ENCODE measurements at regions of chr11 and their contacts with region 1.

Region 1: DNA sequence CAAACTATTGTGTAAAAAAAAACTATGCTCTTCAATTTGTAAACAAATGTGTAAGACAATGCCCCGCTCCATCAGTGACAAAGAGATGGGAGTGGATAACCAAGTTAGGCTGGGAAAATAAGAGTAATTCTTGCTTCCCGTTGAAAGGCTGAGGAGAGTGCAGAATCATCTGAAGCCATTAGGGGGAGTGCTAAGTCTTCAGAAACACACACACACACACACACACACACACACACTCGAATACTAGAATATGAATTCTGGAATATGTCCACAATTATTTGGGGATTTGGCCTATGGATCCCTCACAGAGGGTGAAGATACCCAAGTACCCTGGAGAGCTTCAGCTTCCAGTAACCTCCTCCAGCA is 27.8 kb upstream of the ROBO3 start:
- DNase-seq: peak; percentile 56 to 67 (median 64)
- ATAC-seq: peak; percentile 84
- H3K4me3 ChIP-seq: no peak overlapping the region
- H3K27ac ChIP-seq: no peak overlapping the region
- H3K4me1 ChIP-seq: peaks cover 0 to 10% of the 10 kb centered on the region in 2 experiments; a peak in 2 of 5 replicates
- H3K27me3 ChIP-seq: peaks cover 44 to 51% of the 10 kb centered on the region in 2 experiments
- CTCF ChIP-seq: peak; percentile 56 to 78 (median 76); a peak in 5 of 6 replicates
- EP300 ChIP-seq: no peak
- POLR2A ChIP-seq: no peak
- RAD21 ChIP-seq: peak; percentile 59 to 85

Region 2: DNA sequence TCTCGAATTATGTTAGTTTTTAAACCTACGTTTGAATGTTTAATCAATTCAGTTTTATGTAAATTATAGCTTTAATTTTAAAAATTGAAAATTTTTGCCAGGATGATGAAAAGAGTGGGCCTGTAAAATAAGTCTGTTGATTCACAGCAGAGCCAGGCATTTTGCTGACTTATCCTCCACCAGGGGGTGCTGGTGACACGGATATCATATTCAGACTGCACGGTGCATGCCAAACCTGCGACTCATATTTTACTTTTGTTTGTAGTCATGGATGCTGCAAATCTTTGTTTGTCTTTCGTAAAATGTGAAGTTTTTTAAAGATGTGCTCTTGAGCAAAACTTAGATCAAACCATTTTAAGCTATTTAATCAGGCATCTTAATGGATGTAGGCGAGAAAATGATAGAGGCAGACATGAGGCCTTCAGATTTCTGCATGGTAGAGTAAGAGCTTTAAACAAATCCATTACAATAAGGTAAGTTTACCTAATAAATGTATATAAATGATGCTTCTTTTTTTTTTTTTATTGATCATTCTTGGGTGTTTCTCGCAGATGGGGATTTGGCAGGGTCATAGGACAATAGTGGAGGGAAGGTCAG is 435.1 kb before region 1 on chr11:
- CTCF ChIA-PET with region 1: no interaction called
- POLR2A ChIA-PET with region 1: no interaction called
- in situ Hi-C with region 1: loop called (anchors 25 kb)
- intact Hi-C with region 1: no loop called
- DNase-seq: peak; percentile 58 to 80 (median 64)
- ATAC-seq: peak; percentile 97
- H3K4me3 ChIP-seq: no peak overlapping the region
- H3K27ac ChIP-seq: no peak overlapping the region
- H3K4me1 ChIP-seq: no peaks in the 10 kb centered on the region
- H3K27me3 ChIP-seq: no peaks in the 10 kb centered on the region
- CTCF ChIP-seq: peak; percentile 75 to 79 (median 78)
- EP300 ChIP-seq: no peak
- POLR2A ChIP-seq: no peak
- RAD21 ChIP-seq: peak; percentile 49 to 74

Region 3: DNA sequence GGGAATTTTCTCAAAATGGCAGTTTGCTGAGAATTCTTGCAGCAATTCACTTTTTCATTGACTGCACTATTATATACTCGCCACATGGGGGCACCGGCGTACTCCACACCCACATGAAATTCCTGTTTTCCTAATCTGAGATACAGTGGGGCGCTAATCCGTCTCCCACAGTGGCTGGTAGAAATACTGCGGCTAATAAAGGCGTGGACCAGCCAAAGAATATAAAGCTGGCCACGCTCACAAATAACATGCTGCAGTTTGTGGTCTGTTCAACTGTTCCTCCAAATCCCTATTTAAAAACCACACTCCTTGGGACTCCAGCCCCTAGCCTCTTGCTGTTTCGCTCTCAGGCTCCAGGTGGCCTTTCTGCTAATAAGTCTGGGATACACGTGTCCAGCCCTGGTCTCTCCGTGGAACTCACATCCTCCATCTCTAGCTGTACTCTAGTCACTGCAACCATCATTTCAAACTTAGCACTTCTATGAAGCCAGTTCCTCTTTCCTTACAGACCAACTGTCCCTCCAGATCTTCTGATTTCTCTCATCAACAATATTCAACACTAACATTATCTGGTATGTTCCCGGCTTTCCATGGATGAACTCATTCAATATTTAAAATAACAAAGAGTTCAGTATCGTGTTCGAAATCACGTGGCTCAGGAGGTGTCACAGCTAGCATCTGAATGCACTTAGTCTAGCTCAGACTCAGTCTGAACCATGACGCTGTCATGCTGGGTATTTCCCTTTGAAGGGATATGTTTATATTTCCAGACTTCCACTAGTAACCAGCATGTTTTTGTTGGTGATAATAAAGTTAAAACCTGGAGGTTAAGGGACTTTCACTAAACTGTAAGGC is 192.8 kb before region 1 on chr11:
- CTCF ChIA-PET with region 1: interaction called, 35 read pairs
- POLR2A ChIA-PET with region 1: no interaction called
- in situ Hi-C with region 1: no loop called
- intact Hi-C with region 1: loop called (anchors 1 kb)
- DNase-seq: peak; percentile 66 to 81 (median 68)
- ATAC-seq: peak; percentile 75
- H3K4me3 ChIP-seq: no peak overlapping the region
- H3K27ac ChIP-seq: peak overlapping the region; percentile 81
- H3K4me1 ChIP-seq: peaks cover 0 to 27% of the 10 kb centered on the region in 2 experiments; a peak in 4 of 5 replicates
- H3K27me3 ChIP-seq: no peaks in the 10 kb centered on the region
- CTCF ChIP-seq: peak; percentile 90 to 92 (median 90)
- EP300 ChIP-seq: no peak; the same call in 1 of the 2 replicates
- POLR2A ChIP-seq: no peak
- RAD21 ChIP-seq: peak; percentile 86 to 88

Region 4: DNA sequence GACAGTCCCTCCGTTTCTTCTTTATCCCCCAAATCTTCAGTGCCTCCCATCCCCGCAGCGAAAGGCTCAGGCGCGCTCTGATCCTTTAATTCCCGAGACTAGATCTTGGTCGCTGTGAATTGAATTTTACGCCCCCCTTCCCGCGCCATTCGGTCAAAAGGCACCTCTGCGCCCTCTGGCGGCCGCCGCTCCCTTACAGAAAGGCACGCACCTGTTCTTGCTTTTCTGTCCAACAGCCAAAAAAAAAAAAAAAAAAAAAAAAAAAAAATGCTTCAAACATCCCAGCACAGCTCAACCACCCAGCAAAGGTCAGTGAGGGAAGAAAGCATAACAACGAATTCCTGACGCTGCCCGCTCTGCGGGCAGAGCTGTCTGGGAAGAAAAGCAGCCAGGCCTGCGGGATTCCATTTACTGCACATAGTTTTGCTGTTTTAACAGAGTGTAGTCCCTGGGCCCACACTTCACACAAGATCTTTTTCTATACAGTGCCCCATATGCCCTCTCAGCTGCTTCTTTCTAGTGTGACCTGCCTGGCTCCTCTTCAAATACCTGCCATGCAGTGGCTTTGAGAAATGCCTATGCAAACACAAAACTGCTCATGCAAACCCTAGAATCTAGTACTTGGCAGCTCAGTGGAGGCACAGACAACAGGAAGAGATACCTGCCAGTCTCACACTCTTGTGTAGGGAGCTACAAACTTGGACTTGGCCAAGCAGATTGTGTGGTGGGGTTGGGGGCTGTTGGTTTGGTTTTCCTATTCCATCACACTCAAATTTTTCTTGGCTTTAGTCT is 74.1 kb before region 1 on chr11:
- CTCF ChIA-PET with region 1: interaction called, 24 read pairs
- POLR2A ChIA-PET with region 1: no interaction called
- in situ Hi-C with region 1: no loop called
- intact Hi-C with region 1: loop called (anchors 1 kb)
- DNase-seq: peak; percentile 62 to 87 (median 66)
- ATAC-seq: peak; percentile 75
- H3K4me3 ChIP-seq: peak overlapping the region; percentile 46
- H3K27ac ChIP-seq: no peak overlapping the region
- H3K4me1 ChIP-seq: peaks cover 0 to 34% of the 10 kb centered on the region in 2 experiments; a peak in 4 of 5 replicates
- H3K27me3 ChIP-seq: peaks cover 0 to 22% of the 10 kb centered on the region in 2 experiments; a peak in 2 of 5 replicates
- CTCF ChIP-seq: peak; percentile 82 to 84 (median 84)
- EP300 ChIP-seq: no peak
- POLR2A ChIP-seq: no peak
- RAD21 ChIP-seq: peak; percentile 55 to 70

Region 5: GRCh38 chr11:124865921-124866583 is 28.6 kb after region 1 on chr11:
- CTCF ChIA-PET with region 1: interaction called, 17 read pairs
- POLR2A ChIA-PET with region 1: no interaction called
- in situ Hi-C with region 1: no loop called
- intact Hi-C with region 1: loop called (anchors 1 kb)
- DNase-seq: peak; percentile 58 to 85 (median 84)
- ATAC-seq: peak; percentile 91
- H3K4me3 ChIP-seq: no peak overlapping the region
- H3K27ac ChIP-seq: no peak overlapping the region; the same call in 2 of the 3 replicates
- H3K4me1 ChIP-seq: peaks cover 5 to 22% of the 10 kb centered on the region in 2 experiments; a peak in 2 of 5 replicates
- H3K27me3 ChIP-seq: peaks cover 30 to 82% of the 10 kb centered on the region in 2 experiments
- CTCF ChIP-seq: peak; percentile 70 to 84 (median 82)
- EP300 ChIP-seq: no peak
- POLR2A ChIP-seq: no peak
- RAD21 ChIP-seq: peak; percentile 40 to 68

Region 6: DNA sequence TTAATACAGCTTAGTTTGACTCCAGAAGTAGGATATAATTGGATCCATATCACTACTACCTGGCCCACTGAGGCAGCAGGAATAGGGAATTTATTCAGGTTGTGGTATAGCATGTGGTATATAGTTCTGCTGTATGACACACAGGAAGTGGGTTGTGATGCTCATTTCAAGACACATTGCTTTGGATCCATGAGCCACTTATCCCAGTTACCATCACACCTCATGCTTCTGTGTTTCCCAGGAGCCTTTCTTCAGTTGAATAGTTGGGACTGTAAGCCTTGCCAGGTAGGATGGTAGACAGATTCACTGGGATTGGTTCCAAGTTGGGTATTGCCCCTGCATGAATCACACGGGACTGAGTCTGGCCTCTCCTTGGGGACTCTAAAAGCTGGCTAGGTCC is 215.7 kb after region 1 on chr11:
- CTCF ChIA-PET with region 1: no interaction called
- POLR2A ChIA-PET with region 1: no interaction called
- in situ Hi-C with region 1: no loop called
- intact Hi-C with region 1: no loop called
- DNase-seq: no peak
- ATAC-seq: no peak
- H3K4me3 ChIP-seq: no peak overlapping the region
- H3K27ac ChIP-seq: no peak overlapping the region
- H3K4me1 ChIP-seq: peaks cover 6 to 8% of the 10 kb centered on the region in 2 experiments; a peak in 3 of 5 replicates
- H3K27me3 ChIP-seq: no peaks in the 10 kb centered on the region
- CTCF ChIP-seq: no peak
- EP300 ChIP-seq: no peak
- POLR2A ChIP-seq: no peak
- RAD21 ChIP-seq: no peak